ENCODE measurements at regions of chr11 and their contacts with region 1.

Region 1: DNA sequence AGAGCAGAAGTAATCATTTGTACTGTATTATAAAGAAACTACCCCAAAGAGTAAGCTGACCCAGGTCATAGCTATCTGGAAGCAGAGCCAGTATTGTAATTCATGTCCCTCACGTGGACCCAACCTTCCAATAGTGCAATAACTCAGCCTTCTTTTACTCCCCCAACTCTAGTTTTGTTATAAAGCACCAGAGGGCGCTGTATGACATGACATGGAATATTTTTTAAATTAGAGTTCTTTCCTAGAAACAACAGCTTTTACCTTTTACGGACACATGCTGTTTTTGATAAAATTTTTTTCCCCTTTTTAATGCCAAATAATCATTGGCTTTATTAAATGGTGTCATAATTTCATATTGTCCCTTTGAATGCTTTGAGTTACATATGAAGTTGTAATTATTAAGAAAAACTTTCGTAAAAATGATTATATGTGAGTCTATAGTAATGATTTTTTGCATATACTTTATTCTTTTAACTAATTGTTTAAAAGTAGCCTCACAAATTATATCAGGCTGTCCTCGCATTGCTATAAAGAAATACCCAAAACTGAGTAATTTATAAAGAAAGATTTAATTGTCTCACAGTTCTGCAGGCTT is 76.9 kb downstream of the DKK3 start:
- DNase-seq: peak; percentile 54
- H3K4me3 ChIP-seq: no peak overlapping the region
- H3K27ac ChIP-seq: peak overlapping the region; percentile 1
- H3K4me1 ChIP-seq: no peaks in the 10 kb centered on the region
- H3K27me3 ChIP-seq: no peaks in the 10 kb centered on the region
- CTCF ChIP-seq: peak; percentile 53 to 60

Region 2: DNA sequence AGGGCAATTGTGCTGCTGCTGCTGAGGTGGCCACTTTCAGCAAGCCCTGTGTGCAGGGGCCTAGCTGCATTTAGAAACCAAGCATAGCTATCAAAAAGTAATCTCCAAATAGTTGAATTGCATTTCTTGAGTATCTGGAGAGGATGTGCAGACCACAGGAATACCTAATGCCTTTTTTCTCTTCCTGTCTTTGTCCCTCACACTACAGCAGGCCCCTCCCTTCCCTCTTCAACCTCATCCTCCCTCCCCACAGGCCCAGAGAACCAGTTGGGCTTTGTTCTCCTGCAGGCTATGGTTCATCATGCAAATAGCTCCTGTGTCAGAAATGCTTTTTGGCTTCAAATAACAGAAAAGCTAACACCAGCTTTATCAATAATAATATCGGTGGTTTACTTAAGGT is 29.1 kb after region 1 on chr11:
- CTCF ChIA-PET with region 1: interaction called, 10 read pairs
- dilution Hi-C with region 1: no loop called
- in situ Hi-C with region 1: no loop called
- intact Hi-C with region 1: no loop called
- DNase-seq: no peak
- H3K4me3 ChIP-seq: no peak overlapping the region
- H3K27ac ChIP-seq: no peak overlapping the region
- H3K4me1 ChIP-seq: peaks cover 5% of the 10 kb centered on the region
- H3K27me3 ChIP-seq: no peaks in the 10 kb centered on the region
- CTCF ChIP-seq: no peak

Region 3: GRCh38 chr11:11973361-11973800 is 41.8 kb after region 1 on chr11:
- CTCF ChIA-PET with region 1: no interaction called
- dilution Hi-C with region 1: loop called (anchors 5 kb)
- in situ Hi-C with region 1: no loop called
- intact Hi-C with region 1: no loop called
- DNase-seq: no peak
- H3K4me3 ChIP-seq: no peak overlapping the region
- H3K27ac ChIP-seq: no peak overlapping the region
- H3K4me1 ChIP-seq: peaks cover 35% of the 10 kb centered on the region
- H3K27me3 ChIP-seq: no peaks in the 10 kb centered on the region
- CTCF ChIP-seq: no peak

Region 4: DNA sequence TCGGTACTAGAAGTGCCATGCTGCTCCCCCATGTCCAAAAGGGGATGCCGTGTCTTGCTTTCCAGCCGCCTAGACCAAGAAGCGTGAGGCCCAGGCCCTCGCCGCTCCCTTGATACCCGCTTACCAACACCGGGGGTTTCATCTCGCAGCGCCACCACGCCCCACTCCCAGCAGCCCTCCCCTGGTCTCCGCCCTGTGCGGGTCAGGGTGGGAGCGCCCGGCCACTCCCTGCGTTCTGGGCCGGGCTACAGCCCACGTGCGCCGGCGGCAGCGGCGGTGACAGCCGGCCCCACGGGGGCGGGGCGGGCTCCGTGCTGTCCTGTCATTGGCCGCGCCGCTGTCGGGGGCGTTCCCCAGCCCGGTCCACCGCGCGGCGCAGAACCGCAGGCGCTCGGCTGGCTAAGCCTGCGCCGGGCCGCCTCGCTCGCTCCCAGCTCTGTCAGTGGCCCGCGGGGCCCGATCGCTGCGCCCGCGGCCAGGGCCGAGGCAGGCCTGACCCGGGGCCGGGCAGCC is 178.7 kb after region 1 on chr11 and contains the start of gene MICAL2:
- CTCF ChIA-PET with region 1: no interaction called
- dilution Hi-C with region 1: no loop called
- in situ Hi-C with region 1: no loop called
- intact Hi-C with region 1: loop called (anchors 10 kb)
- DNase-seq: peak; percentile 95
- H3K4me3 ChIP-seq: peak within 1 kb of the TSS; percentile 60 to 81 (median 76)
- H3K27ac ChIP-seq: peak within 1 kb of the TSS; percentile 95
- H3K4me1 ChIP-seq: peaks cover 37% of the 10 kb centered on the region
- H3K27me3 ChIP-seq: no peaks in the 10 kb centered on the region
- CTCF ChIP-seq: no peak
- total RNA-seq, gene MICAL2: 163 to 339 TPM

Region 5: DNA sequence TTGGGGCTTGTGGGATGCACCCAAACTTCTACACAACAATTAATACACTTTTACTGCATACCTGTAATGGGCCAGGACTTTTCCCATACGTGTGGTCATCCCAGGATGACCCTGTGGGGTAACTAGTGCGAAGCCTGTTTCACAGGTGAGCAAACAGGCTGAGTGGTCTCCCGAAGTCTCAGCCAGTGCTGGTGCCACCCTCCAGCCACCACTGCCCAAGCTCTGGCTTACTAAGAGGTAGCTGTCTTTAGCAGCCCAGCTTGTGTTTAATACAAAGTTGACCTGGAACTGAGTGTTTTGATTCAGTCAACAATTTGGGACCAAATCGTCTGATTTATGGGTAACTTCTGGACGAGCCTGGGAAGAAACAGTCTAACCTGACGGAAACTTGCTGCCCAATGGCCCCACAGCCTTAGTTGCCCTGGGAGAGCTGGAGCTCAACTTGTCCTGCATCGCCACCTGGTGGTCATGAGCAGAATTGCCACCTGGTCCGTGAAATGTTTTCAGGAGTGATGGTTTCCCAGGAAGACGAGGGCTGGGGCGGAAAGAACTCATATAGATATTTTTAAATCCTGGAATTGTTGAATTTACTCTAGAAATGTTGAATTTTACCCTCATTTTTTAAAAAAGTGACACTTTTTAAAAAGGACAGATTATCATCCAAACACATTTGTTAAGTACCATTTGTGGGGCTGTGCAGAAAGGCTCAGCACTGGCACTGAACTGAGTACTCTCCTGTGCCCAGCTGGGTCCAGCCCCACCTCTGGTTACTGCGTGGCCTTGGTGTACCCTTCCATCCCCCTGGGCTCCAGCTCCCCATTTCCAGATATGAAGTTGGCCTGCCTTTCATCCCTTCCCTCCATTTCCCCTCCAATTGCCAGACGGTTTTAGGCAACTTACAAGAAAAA is 350.3 kb after region 1 on chr11:
- CTCF ChIA-PET with region 1: no interaction called
- dilution Hi-C with region 1: no loop called
- in situ Hi-C with region 1: no loop called
- intact Hi-C with region 1: loop called (anchors 1 kb)
- DNase-seq: peak; percentile 67
- H3K4me3 ChIP-seq: no peak overlapping the region
- H3K27ac ChIP-seq: no peak overlapping the region
- H3K4me1 ChIP-seq: peaks cover 44% of the 10 kb centered on the region
- H3K27me3 ChIP-seq: no peaks in the 10 kb centered on the region
- CTCF ChIP-seq: peak; percentile 93 to 96